AG04449 (cell line): ENCODE measurements at regions of chr1 and their contacts with region 1.

Region 1: DNA sequence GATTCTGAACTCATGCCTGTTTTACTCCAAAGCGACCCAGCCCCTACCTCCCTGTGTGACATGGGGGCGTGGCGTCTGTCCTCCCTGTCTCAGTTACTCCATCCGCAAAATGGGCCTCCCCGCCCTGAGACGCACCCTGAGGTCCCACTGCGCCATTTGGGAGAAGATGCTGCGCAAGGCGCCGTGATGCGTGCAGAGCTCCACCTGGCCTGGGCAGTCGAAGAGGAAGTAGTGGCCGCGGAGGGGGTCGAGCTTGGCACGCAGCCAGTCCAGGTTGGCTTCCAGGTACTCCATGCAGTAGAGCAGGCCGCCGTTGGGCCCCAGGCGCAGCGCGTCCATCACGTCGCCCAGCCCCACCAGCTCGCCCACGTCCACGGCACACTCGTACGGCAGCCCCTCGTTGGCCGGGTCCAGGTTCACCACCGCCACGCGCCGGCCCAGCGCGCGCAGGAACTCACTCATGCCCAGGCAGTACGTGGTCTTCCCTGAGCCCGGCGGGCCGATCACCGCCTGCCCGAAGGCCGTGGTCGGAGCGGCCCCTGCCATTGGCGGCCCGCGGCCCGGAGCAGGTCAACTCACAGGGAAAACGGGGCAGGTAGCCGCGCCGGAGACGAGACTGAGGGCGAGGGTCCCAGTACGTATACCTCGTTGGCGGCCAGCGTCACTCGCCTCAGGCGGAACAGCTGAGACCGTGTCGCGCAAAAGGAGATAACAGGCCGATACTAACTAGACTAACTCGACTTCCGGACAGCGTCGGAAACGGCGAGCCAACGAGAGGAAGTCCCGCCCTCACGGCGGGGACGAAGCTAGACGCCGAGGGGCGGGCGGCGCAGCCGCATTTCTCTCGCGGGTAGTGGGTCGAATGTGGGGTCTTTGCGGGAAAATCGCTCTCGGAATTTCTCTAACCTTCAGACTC is at the start of gene GPN2:
- DNase-seq: peak; percentile 21
- H3K4me3 ChIP-seq: peak within 1 kb of the TSS; percentile 98
- CTCF ChIP-seq: no peak

Region 2: GRCh38 chr1:26417111-26417759 is 472.6 kb before region 1 on chr1:
- CTCF ChIA-PET with region 1: no interaction called
- POLR2A ChIA-PET with region 1: no interaction called
- DNase-seq: no peak
- H3K4me3 ChIP-seq: no peak overlapping the region
- CTCF ChIP-seq: peak; percentile 97

Region 3: GRCh38 chr1:26744075-26744959 is 145.5 kb before region 1 on chr1:
- CTCF ChIA-PET with region 1: no interaction called
- POLR2A ChIA-PET with region 1: no interaction called
- DNase-seq: no peak
- H3K4me3 ChIP-seq: no peak overlapping the region; the same call in 1 of the 2 replicates
- CTCF ChIP-seq: no peak

Region 4: DNA sequence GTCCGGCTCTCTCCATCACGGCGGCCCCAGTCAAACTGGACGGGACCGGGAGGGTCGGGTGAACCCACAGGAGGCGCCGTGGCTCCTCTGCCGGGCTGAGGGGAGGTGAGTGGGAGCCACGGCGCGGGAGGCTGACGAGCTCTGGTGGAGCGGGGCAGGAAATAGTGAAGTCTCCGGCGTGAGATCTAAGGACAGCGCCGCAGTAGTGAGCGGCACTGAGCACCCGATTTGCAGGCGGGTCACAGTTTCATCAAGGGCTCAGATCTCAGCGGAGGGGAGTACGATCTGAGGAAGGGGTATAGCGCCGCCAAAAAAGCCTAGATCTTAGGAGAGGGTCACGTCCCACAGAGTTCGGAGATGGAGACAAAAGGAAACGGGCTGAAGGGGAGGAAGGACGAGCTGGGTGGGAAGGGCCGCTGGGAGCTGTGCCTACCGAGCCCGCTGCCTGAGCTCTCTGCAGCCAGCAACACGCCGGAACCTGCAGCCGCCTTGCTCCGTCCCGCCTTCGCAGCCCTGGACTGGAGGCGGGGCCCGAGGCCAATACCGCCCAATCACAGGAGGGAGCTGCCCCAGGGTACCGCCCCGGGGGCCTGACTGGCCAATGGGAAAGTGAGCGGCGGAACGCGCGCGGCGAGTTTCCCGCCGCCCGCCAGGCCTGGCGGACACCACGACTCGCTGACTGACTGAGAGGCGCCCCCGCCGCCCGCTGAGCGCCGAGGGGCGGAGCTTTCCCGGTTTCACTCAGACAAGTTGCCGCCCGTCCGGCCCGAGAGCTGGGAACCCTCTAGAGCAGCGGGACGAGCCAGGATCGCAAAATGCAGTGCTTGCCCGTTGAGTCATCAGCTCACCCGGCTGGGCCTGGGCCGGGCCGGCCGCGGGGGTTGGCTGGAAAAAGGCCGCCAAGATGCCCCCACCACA is 24.9 kb before region 1 on chr1:
- CTCF ChIA-PET with region 1: interaction called, 12 read pairs
- POLR2A ChIA-PET with region 1: interaction called, 11 read pairs
- DNase-seq: peak; percentile 86
- H3K4me3 ChIP-seq: peak overlapping the region; percentile 59
- CTCF ChIP-seq: no peak

Region 5: DNA sequence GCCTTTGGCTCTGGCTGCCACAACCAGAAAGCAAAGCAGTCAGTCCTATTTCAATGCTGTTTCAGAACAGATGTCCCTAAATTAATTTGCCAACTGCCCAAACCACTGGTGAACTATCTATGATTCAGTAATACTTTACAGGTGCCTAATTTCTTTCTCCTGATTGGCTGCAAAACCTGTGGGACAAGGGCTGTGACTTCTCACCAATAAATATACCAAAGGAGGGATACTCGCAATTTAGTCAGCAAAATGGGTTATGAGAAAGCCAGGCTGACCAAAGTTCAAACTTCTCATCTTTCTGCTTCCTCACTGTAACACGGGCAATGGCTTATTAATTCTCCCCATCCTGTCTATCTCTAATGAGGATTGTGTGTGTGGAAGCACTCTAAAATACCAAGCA is 12.5 kb before region 1 on chr1:
- CTCF ChIA-PET with region 1: interaction called, 60 read pairs
- POLR2A ChIA-PET with region 1: interaction called, 7 read pairs
- DNase-seq: no peak
- H3K4me3 ChIP-seq: no peak overlapping the region
- CTCF ChIP-seq: no peak

Region 6: DNA sequence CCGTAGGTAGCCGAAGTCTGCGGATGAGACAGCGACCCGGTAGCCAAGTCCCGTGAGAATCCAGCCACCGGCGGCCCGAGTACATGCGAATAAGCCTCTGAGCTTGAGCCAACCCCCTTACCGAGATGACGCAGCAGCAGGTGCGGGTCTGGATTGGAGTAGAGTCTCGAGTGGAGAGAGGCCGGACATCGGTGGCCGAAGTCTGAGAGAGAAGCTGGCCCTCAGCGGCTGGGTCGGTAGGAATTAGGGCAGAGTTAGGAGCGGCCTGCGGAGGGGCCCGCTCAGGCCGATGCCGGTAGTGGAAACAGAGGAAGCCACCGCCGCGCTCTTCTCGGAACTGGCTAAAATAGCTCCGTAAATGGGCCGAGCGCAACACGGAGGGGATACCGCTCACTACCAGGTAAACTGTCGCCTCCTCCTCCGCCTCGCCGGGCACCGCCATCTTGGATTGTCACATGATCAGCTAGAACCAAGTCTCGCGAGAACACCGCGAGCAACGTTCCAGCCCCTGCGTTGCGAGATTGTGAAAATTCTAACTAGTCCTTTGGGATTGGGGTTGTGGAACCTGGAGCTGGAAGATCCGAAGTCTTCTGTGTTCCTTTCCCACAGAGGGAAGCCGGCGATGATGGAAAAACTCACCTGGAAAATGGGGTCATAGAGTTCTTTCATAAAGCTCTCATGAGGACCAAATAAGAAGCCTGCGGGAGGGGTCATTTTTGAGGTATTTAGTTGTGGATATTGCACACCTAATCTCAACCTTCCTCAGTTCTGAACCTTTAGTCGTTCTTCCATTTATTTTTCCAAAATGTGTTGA is 10.4 kb after region 1 on chr1 and contains the start of gene GPATCH3:
- CTCF ChIA-PET with region 1: interaction called, 32 read pairs
- POLR2A ChIA-PET with region 1: interaction called, 42 read pairs
- DNase-seq: peak; percentile 42
- H3K4me3 ChIP-seq: peak within 1 kb of the TSS; percentile 98
- CTCF ChIP-seq: no peak

Region 7: DNA sequence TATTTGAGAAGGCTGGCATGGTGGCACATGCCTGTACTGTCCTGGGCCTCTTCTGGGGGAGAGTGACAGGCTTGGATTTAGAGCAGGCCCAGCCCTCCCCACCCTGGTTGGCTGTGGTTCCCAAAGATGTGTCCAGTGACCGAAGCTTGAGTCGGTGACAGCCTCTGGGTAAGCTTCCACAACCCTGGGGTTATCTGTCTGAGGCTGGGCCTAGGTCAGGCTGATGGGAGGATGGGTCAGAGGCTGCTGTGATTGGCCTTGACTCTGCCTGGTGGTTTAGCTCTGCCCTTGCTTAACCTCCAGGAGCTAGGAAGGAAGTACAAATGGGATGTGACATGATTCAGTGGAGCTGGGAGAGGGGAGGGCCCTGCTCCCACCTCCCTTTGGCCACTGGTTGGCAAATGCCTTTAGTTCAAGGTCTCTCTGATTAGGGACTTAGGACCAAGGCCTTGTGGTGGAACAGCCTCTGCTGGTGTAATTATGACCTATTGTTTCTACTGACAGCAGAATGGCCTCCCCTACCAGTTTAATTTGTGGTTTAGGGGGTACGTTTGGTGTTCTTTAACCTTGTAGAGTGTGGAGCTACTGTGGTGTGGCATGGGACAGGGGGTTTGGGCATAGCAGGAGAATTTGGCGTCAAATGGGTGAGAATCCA is 48.3 kb after region 1 on chr1:
- CTCF ChIA-PET with region 1: no interaction called
- POLR2A ChIA-PET with region 1: no interaction called
- DNase-seq: no peak
- H3K4me3 ChIP-seq: no peak overlapping the region
- CTCF ChIP-seq: no peak